HCT116 (cell line): ENCODE measurements at regions of chr18 and their contacts with region 1.

Region 1: GRCh38 chr18:23099621-23100020 is 35.7 kb upstream of the CABLES1 start:
- DNase-seq: peak; percentile 18
- ATAC-seq: peak; percentile 48
- H3K4me3 ChIP-seq: no peak overlapping the region
- H3K27ac ChIP-seq: no peak overlapping the region
- H3K4me1 ChIP-seq: peaks cover 10 to 31% of the 10 kb centered on the region in 2 experiments; a peak in 3 of 4 replicates
- H3K27me3 ChIP-seq: no peaks in the 10 kb centered on the region
- CTCF ChIP-seq: no peak
- POLR2A ChIP-seq: no peak
- RAD21 ChIP-seq: 0 out of 2 replicates have a peak, but pooled peaks have one; percentile 3

Region 2: DNA sequence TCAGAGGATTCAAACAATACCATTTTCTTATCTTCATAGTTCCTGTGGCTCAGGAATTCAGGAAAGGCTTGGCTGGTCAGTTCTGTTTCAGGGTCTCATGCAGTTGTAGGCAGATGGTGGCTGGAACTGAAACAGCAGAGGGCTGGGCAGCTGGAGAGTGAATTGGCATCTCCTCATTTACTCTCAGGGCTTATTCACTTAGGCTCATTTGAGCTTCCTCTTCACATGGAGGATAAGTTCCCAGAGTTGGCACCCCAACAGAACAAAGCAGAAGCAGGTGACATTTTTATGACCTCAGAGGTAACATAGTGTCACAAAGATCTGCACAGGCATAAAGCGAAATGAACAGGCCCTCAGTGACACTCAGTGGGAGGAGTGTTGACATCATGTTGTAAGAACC is 100.4 kb before region 1 on chr18:
- CTCF ChIA-PET with region 1: no interaction called
- POLR2A ChIA-PET with region 1: no interaction called
- RAD21 ChIA-PET with region 1: no interaction called
- intact Hi-C with region 1: no loop called
- DNase-seq: no peak
- ATAC-seq: no peak
- H3K4me3 ChIP-seq: no peak overlapping the region
- H3K27ac ChIP-seq: no peak overlapping the region
- H3K4me1 ChIP-seq: no peaks in the 10 kb centered on the region
- H3K27me3 ChIP-seq: no peaks in the 10 kb centered on the region
- CTCF ChIP-seq: no peak
- POLR2A ChIP-seq: no peak
- RAD21 ChIP-seq: no peak

Region 3: DNA sequence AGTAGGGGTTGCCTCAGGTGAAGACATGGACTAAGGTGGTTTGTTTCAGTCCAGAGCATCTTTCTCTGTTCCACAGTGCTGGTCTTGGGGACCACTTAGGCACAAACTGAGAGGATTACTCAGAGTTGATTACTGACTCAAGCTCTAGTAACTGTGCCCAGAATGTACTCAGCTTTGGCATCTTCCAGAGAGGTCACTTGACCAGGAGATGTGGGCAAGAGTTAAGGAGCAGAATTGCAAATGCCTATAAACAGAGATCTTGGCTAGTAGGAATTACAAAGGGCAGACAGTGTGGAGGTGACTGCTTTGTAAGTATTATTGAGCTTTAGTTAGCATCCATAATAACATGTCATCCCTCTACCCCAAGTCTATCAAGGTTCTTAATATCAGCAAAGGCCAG is 57.5 kb before region 1 on chr18:
- CTCF ChIA-PET with region 1: no interaction called
- POLR2A ChIA-PET with region 1: no interaction called
- RAD21 ChIA-PET with region 1: no interaction called
- intact Hi-C with region 1: loop called (anchors 5 kb)
- DNase-seq: no peak
- ATAC-seq: no peak
- H3K4me3 ChIP-seq: no peak overlapping the region
- H3K27ac ChIP-seq: no peak overlapping the region
- H3K4me1 ChIP-seq: no peaks in the 10 kb centered on the region
- H3K27me3 ChIP-seq: no peaks in the 10 kb centered on the region
- CTCF ChIP-seq: no peak
- POLR2A ChIP-seq: no peak
- RAD21 ChIP-seq: no peak